ENCODE measurements at regions of chr12 and their contacts with region 1.

Region 1: DNA sequence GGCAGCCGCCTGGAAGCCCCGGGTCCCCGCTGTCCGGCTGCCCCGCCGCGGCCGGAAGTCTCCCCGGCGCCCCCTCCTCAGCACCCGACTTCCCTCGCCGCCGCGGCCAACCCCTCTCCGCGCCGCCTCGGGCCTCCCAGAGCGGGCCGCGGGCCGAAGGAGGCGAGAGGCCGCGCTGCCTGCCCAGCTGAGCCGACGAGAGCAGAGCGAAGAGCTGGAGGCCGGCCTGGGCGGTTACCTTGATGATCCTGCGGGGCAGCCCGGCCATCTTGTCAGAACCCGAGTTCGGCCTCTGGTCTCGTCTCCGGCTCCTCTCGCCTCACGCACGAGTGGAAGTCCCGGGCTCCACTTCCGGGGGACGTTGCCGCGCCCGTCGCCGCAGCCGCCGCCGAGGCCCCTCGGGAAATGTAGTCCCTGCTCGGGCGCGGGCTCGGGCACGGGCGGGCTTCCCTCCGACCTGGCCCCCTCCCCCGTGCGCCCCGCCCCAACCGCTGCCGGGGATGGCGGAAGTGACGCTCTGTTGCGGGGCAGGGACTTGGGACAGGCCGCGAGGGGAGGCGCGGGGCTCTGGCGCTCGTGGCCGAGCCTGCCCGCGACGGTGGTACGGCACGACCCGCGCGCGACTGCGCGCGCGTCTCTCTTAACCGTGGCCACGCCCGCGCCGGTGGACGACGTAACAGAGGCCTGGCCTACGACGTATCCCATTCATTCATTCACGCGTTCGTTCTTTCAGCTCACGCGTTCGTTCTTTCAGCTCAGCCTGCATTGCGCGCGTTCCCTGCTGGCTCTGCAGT is at the start of gene UBE2N:
- DNase-seq: peak; percentile 92 to 97 (median 96)
- ATAC-seq: peak; percentile 83
- H3K4me3 ChIP-seq: peak within 1 kb of the TSS; percentile 78
- H3K4me3 Mint-ChIP-seq: peak within 1 kb of the TSS; percentile 97
- H3K27ac ChIP-seq: peak within 1 kb of the TSS; percentile 87 to 90
- H3K27ac Mint-ChIP-seq: peak within 1 kb of the TSS; percentile 96
- H3K4me1 ChIP-seq: peaks cover 47% of the 10 kb centered on the region
- H3K4me1 Mint-ChIP-seq: peaks cover 48% of the 10 kb centered on the region
- H3K27me3 ChIP-seq: no peaks in the 10 kb centered on the region
- H3K27me3 Mint-ChIP-seq: no peaks in the 10 kb centered on the region
- CTCF ChIP-seq: no peak
- total RNA-seq, gene UBE2N: 89.5 to 93.6 TPM

Region 2: GRCh38 chr12:93167841-93168492 is 273.8 kb before region 1 on chr12:
- CTCF ChIA-PET with region 1: no interaction called
- POLR2A ChIA-PET with region 1: no interaction called
- intact Hi-C with region 1: no loop called
- DNase-seq: peak in 2 of 9 experiments; percentile 9 to 47
- ATAC-seq: no peak
- H3K4me3 ChIP-seq: no peak overlapping the region
- H3K4me3 Mint-ChIP-seq: peak overlapping the region; percentile 49
- H3K27ac ChIP-seq: no peak overlapping the region
- H3K27ac Mint-ChIP-seq: no peak overlapping the region
- H3K4me1 ChIP-seq: no peaks in the 10 kb centered on the region
- H3K4me1 Mint-ChIP-seq: peaks cover 6% of the 10 kb centered on the region
- H3K27me3 ChIP-seq: peaks cover 0 to 4% of the 10 kb centered on the region in 2 experiments
- H3K27me3 Mint-ChIP-seq: no peaks in the 10 kb centered on the region
- CTCF ChIP-seq: no peak

Region 3: DNA sequence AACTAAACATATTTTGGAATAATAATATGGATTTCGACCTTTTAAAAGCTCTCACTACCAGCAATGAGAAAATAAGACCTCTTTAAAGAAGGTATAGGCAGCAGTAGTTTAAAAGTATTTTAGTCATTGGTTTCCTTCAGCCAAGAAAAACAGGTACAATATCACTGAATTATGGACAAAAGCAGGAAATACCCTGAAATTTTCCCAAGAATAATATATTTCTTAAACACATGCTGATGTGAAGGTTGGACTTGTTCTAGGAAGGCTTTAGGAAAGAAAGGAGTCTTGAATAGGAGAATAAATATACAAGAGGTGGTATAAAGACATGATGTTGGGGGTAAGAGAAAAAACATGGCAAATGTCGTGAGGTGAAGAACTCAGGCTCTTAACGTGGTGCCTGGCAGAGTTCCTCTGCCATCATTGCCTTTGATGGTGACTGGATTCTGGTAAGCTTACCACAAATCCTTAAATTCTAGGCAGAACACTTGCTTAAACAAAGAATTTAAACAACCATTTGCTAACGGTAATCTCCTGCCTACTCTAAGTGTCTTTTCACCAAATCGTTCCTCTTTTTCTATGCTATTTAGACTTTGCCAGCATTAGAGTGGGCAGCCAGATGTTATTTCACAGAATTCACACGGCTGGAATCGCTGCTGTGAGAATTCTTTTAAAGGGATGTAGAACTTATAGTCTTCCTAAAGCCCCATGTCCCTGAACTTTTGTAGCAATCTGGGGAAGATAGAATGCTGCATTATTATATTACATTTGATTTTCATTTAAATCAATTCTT is 76.0 kb before region 1 on chr12:
- CTCF ChIA-PET with region 1: no interaction called
- POLR2A ChIA-PET with region 1: no interaction called
- intact Hi-C with region 1: no loop called
- DNase-seq: no peak
- ATAC-seq: no peak
- H3K4me3 ChIP-seq: no peak overlapping the region
- H3K4me3 Mint-ChIP-seq: no peak overlapping the region
- H3K27ac ChIP-seq: no peak overlapping the region
- H3K27ac Mint-ChIP-seq: no peak overlapping the region
- H3K4me1 ChIP-seq: peaks cover 15% of the 10 kb centered on the region
- H3K4me1 Mint-ChIP-seq: peaks cover 18% of the 10 kb centered on the region
- H3K27me3 ChIP-seq: no peaks in the 10 kb centered on the region
- H3K27me3 Mint-ChIP-seq: no peaks in the 10 kb centered on the region
- CTCF ChIP-seq: no peak

Region 4: DNA sequence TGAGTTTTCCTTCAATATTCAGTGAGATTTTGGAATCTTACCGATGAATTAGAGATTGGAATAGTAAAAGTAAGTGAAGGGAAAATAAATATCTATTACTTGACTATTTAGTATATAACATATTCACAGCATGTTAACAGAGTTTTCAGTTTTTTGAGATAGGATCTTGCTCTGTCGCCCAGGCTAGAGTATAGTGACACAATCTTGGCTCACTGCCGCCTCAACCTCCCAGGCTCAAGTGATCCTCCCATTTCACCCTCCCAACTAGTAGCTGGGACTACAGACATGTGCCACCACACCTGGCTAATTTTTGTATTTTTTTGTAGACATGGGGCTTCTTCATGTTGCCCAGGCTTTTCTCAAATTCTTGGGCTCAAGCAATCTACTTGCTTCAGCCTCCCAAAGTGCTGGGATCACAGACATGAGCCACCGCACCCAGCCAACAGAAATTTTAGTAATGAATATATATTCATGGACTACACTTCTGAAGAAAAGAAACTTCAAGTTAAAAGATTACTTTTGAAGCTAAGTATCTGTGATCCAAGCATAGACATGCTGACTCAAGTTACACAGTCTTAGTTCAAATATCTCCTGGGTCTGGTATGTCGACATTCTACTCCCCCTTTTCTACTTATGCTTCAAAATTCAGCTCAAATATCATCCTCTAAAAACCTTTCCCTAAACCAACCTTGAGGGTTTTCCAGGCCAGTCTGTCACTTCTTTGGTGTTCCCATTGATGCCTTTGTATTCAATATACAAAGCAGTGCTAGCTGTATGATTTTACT is 13.8 kb before region 1 on chr12:
- CTCF ChIA-PET with region 1: no interaction called
- POLR2A ChIA-PET with region 1: interaction called, 4 read pairs
- intact Hi-C with region 1: loop called in 1 of 2 experiments (anchors 2 kb)
- DNase-seq: no peak
- ATAC-seq: no peak
- H3K4me3 ChIP-seq: no peak overlapping the region
- H3K4me3 Mint-ChIP-seq: no peak overlapping the region
- H3K27ac ChIP-seq: no peak overlapping the region
- H3K27ac Mint-ChIP-seq: peak overlapping the region; percentile 23
- H3K4me1 ChIP-seq: peaks cover 75% of the 10 kb centered on the region
- H3K4me1 Mint-ChIP-seq: peaks cover 84% of the 10 kb centered on the region
- H3K27me3 ChIP-seq: no peaks in the 10 kb centered on the region
- H3K27me3 Mint-ChIP-seq: no peaks in the 10 kb centered on the region
- CTCF ChIP-seq: no peak

Region 5: GRCh38 chr12:93453633-93454032 is 11.8 kb after region 1 on chr12:
- CTCF ChIA-PET with region 1: interaction called, 3 read pairs
- POLR2A ChIA-PET with region 1: no interaction called
- intact Hi-C with region 1: loop called in 1 of 2 experiments (anchors 1 kb)
- DNase-seq: no peak
- ATAC-seq: no peak
- H3K4me3 ChIP-seq: no peak overlapping the region
- H3K4me3 Mint-ChIP-seq: no peak overlapping the region
- H3K27ac ChIP-seq: no peak overlapping the region
- H3K27ac Mint-ChIP-seq: no peak overlapping the region
- H3K4me1 ChIP-seq: peaks cover 9% of the 10 kb centered on the region
- H3K4me1 Mint-ChIP-seq: peaks cover 9% of the 10 kb centered on the region
- H3K27me3 ChIP-seq: no peaks in the 10 kb centered on the region
- H3K27me3 Mint-ChIP-seq: peaks cover 2% of the 10 kb centered on the region
- CTCF ChIP-seq: no peak

Region 6: GRCh38 chr12:93467351-93468007 is 25.7 kb after region 1 on chr12 and contains the start of gene MRPL42:
- CTCF ChIA-PET with region 1: interaction called, 8 read pairs
- POLR2A ChIA-PET with region 1: interaction called, 4 read pairs
- intact Hi-C with region 1: loop called (anchors 1 kb)
- DNase-seq: peak; percentile 88 to 96 (median 91)
- ATAC-seq: peak; percentile 94
- H3K4me3 ChIP-seq: peak within 1 kb of the TSS; percentile 64 to 95
- H3K4me3 Mint-ChIP-seq: peak within 1 kb of the TSS; percentile 93
- H3K27ac ChIP-seq: peak within 1 kb of the TSS; percentile 81 to 88
- H3K27ac Mint-ChIP-seq: peak within 1 kb of the TSS; percentile 95
- H3K4me1 ChIP-seq: peaks cover 15% of the 10 kb centered on the region
- H3K4me1 Mint-ChIP-seq: peaks cover 34% of the 10 kb centered on the region
- H3K27me3 ChIP-seq: no peaks in the 10 kb centered on the region
- H3K27me3 Mint-ChIP-seq: no peaks in the 10 kb centered on the region
- CTCF ChIP-seq: peak; percentile 71
- total RNA-seq, gene MRPL42: 31.6 to 33.2 TPM

Region 7: GRCh38 chr12:94204499-94205247 is 762.9 kb after region 1 on chr12:
- CTCF ChIA-PET with region 1: no interaction called
- POLR2A ChIA-PET with region 1: no interaction called
- intact Hi-C with region 1: no loop called
- DNase-seq: peak in 1 of 9 experiments; percentile 5
- ATAC-seq: no peak
- H3K4me3 ChIP-seq: no peak overlapping the region
- H3K4me3 Mint-ChIP-seq: no peak overlapping the region
- H3K27ac ChIP-seq: peak overlapping the region in 1 of 2 experiments; percentile 68
- H3K27ac Mint-ChIP-seq: peak overlapping the region; percentile 28
- H3K4me1 ChIP-seq: peaks cover 50% of the 10 kb centered on the region
- H3K4me1 Mint-ChIP-seq: peaks cover 65% of the 10 kb centered on the region
- H3K27me3 ChIP-seq: no peaks in the 10 kb centered on the region
- H3K27me3 Mint-ChIP-seq: no peaks in the 10 kb centered on the region
- CTCF ChIP-seq: no peak

Region 8: GRCh38 chr12:94459728-94460615 is 1018.2 kb after region 1 on chr12 and contains the start of gene CEP83:
- CTCF ChIA-PET with region 1: no interaction called
- POLR2A ChIA-PET with region 1: no interaction called
- intact Hi-C with region 1: loop called in 1 of 2 experiments (anchors 10 kb)
- DNase-seq: peak; percentile 90 to 98 (median 97)
- ATAC-seq: peak; percentile 96
- H3K4me3 ChIP-seq: peak within 1 kb of the TSS; percentile 94 to 96
- H3K4me3 Mint-ChIP-seq: peak within 1 kb of the TSS; percentile 96
- H3K27ac ChIP-seq: peak within 1 kb of the TSS; percentile 91 to 93
- H3K27ac Mint-ChIP-seq: peak within 1 kb of the TSS; percentile 94
- H3K4me1 ChIP-seq: peaks cover 6% of the 10 kb centered on the region
- H3K4me1 Mint-ChIP-seq: peaks cover 33% of the 10 kb centered on the region
- H3K27me3 ChIP-seq: peaks cover 0 to 2% of the 10 kb centered on the region in 2 experiments
- H3K27me3 Mint-ChIP-seq: peaks cover 5% of the 10 kb centered on the region
- CTCF ChIP-seq: no peak
- total RNA-seq, gene CEP83: 9.7 to 11.2 TPM